B cell (primary cell): ENCODE measurements at regions of chr10 and their contacts with region 1.

Region 1: GRCh38 chr10:22988581-22989360 is 60.9 kb downstream of the ARMC3 start:
- DNase-seq: peak; percentile 82
- ATAC-seq: peak; percentile 83
- H3K4me3 ChIP-seq: no peak overlapping the region
- H3K4me3 Mint-ChIP-seq: no peak overlapping the region
- H3K27ac ChIP-seq: no peak overlapping the region
- H3K27ac Mint-ChIP-seq: peak overlapping the region; percentile 22
- H3K4me1 ChIP-seq: no peaks in the 10 kb centered on the region
- H3K4me1 Mint-ChIP-seq: peaks cover 6% of the 10 kb centered on the region
- H3K27me3 ChIP-seq: peaks cover 0 to 3% (median 0%) of the 10 kb centered on the region in 4 experiments
- H3K27me3 Mint-ChIP-seq: peaks cover 16% of the 10 kb centered on the region
- CTCF ChIP-seq: peak; percentile 97

Region 2: DNA sequence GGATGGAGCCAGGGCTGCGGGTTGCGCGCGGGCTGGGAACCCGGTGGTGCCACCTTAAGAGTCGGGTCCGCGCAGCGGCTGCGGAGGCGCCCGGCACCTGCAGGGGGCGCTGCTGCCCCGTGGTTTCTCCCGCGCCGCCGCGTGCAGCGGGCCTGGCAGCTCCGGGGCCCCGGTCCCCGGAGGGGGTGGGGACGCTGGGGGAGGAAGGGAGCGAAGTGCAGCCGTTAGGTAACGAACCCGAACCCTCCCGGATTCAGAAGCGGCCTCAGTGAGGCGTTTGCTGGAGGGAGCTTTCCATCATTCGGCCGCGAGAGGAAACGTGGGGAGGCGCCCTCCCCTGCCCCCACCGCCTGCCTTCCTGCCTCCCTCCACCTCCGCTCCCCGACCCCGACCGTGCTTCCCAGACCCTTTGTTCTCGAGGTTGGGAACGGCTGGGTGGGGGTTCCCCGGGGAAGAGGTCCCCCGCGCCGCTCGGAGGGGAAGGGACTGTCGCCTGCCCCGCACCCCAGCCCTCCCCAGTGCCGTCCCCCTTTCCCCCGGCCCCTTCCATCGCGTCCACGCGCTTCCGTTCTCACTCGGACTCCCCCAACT is 1492.9 kb before region 1 on chr10:
- CTCF ChIA-PET with region 1: interaction called, 4 read pairs
- POLR2A ChIA-PET with region 1: no interaction called
- intact Hi-C with region 1: loop called (anchors 2 kb)
- DNase-seq: peak; percentile 88
- ATAC-seq: peak; percentile 82
- H3K4me3 ChIP-seq: peak overlapping the region; percentile 44 to 74 (median 67)
- H3K4me3 Mint-ChIP-seq: peak overlapping the region; percentile 92
- H3K27ac ChIP-seq: no peak overlapping the region
- H3K27ac Mint-ChIP-seq: no peak overlapping the region
- H3K4me1 ChIP-seq: peaks cover 47 to 51% of the 10 kb centered on the region in 2 donors
- H3K4me1 Mint-ChIP-seq: peaks cover 39% of the 10 kb centered on the region
- H3K27me3 ChIP-seq: peaks cover 2 to 66% (median 55%) of the 10 kb centered on the region in 4 experiments
- H3K27me3 Mint-ChIP-seq: peaks cover 60% of the 10 kb centered on the region
- CTCF ChIP-seq: peak; percentile 96

Region 3: DNA sequence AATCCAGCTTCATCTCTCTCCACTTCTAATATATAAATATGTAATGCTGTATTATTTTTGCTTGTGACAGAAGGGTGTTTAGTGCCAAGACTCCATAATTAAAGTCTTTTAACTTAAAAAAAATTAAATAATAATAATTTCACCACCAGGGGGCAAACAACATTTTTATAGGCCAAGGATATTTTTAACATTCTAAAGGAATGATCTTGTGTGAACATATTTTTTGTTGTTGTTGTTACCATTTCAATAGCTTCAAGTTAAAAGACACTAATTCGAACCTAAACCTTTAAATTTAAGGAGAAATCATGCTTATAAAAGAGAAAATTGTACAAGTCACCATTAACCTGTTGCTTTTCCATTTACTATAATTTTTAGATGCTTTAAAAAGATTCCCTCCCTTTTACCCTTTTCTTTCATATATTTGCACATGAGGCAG is 977.8 kb before region 1 on chr10:
- CTCF ChIA-PET with region 1: interaction called, 103 read pairs
- POLR2A ChIA-PET with region 1: no interaction called
- intact Hi-C with region 1: loop called (anchors 1 kb)
- DNase-seq: peak; percentile 39
- ATAC-seq: no peak
- H3K4me3 ChIP-seq: no peak overlapping the region
- H3K4me3 Mint-ChIP-seq: no peak overlapping the region
- H3K27ac ChIP-seq: no peak overlapping the region
- H3K27ac Mint-ChIP-seq: no peak overlapping the region
- H3K4me1 ChIP-seq: peaks cover 0 to 3% of the 10 kb centered on the region in 2 donors
- H3K4me1 Mint-ChIP-seq: peaks cover 5% of the 10 kb centered on the region
- H3K27me3 ChIP-seq: no peaks in the 10 kb centered on the region
- H3K27me3 Mint-ChIP-seq: no peaks in the 10 kb centered on the region
- CTCF ChIP-seq: peak; percentile 83

Region 4: DNA sequence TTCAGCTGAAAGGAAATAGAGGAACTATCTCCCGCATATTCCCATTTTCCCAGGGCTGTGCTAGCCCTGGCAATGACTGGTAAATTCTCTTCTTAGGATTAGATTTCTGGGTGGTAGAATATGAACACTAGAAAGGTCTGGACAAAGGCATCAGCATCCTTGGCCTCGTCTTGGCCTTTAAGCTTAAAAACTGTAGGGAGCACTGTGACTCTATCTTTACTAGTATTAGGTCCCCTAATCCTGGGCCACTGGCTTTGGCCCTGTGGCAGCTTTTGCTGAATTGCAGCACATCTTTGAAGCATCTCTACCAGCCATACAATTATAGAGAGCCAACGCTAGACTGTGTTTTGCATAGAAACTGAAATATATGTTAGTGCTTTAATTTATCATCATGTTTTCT is 729.5 kb before region 1 on chr10:
- CTCF ChIA-PET with region 1: interaction called, 5 read pairs
- POLR2A ChIA-PET with region 1: no interaction called
- intact Hi-C with region 1: loop called (anchors 1 kb)
- DNase-seq: peak; percentile 34
- ATAC-seq: peak; percentile 45
- H3K4me3 ChIP-seq: no peak overlapping the region
- H3K4me3 Mint-ChIP-seq: no peak overlapping the region
- H3K27ac ChIP-seq: no peak overlapping the region
- H3K27ac Mint-ChIP-seq: no peak overlapping the region
- H3K4me1 ChIP-seq: peaks cover 0 to 4% of the 10 kb centered on the region in 2 donors
- H3K4me1 Mint-ChIP-seq: peaks cover 10% of the 10 kb centered on the region
- H3K27me3 ChIP-seq: peaks cover 0 to 14% (median 2%) of the 10 kb centered on the region in 4 experiments
- H3K27me3 Mint-ChIP-seq: peaks cover 19% of the 10 kb centered on the region
- CTCF ChIP-seq: peak; percentile 25

Region 5: DNA sequence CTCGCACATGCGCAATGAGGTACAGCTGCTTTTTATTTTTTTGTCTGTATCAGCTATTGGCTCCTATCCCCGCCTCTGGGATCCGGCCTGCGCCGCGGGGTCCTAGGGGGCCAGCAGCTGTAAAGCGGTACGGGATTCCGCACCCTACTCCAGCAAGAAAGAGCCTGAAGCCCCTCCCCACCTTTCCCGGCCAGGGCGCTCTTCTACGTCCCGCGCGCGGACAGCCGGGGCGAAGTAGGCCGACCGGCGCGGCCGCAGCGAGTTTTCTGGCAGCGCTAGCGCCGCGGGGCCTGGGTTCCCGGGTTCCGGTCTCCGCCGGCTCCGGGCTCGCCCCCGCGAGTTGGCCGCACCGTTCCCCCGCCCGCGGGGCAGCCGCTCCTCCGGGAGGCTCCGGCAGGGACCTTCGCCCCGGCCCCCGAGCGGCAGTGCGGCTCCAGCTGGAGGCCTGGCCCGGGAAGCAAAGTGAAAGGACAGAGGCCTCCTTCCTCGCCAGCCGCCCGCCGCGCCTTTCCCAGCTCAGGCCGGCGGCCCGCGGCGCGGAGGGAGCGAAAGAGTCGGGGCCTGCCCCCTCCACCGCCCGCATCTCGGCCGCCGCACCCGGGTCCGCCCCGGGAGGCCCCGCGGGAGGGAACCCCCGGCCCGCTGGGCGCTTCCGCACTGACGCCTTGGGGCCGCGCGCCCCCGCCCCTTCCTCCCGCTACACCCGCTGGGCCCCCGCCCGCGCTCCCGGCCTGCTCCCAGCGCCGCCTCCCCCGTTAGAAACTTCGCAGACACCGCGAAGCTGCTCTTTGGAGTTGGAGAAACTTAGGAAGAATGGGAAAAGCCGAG is 648.2 kb before region 1 on chr10:
- CTCF ChIA-PET with region 1: interaction called, 10 read pairs
- POLR2A ChIA-PET with region 1: no interaction called
- intact Hi-C with region 1: loop called (anchors 5 kb)
- DNase-seq: peak; percentile 92
- ATAC-seq: peak; percentile 62
- H3K4me3 ChIP-seq: peak overlapping the region; percentile 62 to 79 (median 73)
- H3K4me3 Mint-ChIP-seq: peak overlapping the region; percentile 94
- H3K27ac ChIP-seq: peak overlapping the region; percentile 70 to 81
- H3K27ac Mint-ChIP-seq: peak overlapping the region; percentile 94
- H3K4me1 ChIP-seq: peaks cover 38 to 72% of the 10 kb centered on the region in 2 donors
- H3K4me1 Mint-ChIP-seq: peaks cover 31% of the 10 kb centered on the region
- H3K27me3 ChIP-seq: peaks cover 11 to 86% (median 73%) of the 10 kb centered on the region in 4 experiments
- H3K27me3 Mint-ChIP-seq: peaks cover 58% of the 10 kb centered on the region
- CTCF ChIP-seq: no peak

Region 6: DNA sequence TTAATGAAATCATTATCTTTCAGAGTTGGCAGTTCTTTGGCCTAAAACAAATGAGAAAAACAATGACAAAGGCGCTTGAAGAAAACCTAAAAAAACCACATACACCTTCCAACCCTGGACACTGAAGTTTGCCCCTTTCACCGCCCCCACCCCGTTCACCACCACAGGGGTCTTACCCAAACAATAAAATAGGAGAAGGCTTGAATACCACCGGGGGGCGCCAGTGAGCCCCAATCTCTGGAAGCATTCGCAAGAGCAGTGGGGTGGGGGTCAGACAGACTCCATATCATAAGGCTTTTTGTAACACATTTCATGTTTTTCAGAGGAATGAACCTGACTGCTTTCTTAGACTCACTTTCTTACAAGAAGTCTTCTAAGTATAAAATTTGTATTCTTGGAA is 438.0 kb before region 1 on chr10:
- CTCF ChIA-PET with region 1: interaction called, 25 read pairs
- POLR2A ChIA-PET with region 1: no interaction called
- intact Hi-C with region 1: loop called (anchors 1 kb)
- DNase-seq: peak; percentile 72
- ATAC-seq: peak; percentile 49
- H3K4me3 ChIP-seq: no peak overlapping the region
- H3K4me3 Mint-ChIP-seq: no peak overlapping the region
- H3K27ac ChIP-seq: no peak overlapping the region
- H3K27ac Mint-ChIP-seq: no peak overlapping the region
- H3K4me1 ChIP-seq: no peaks in the 10 kb centered on the region
- H3K4me1 Mint-ChIP-seq: peaks cover 5% of the 10 kb centered on the region
- H3K27me3 ChIP-seq: no peaks in the 10 kb centered on the region
- H3K27me3 Mint-ChIP-seq: no peaks in the 10 kb centered on the region
- CTCF ChIP-seq: peak; percentile 84

Region 7: DNA sequence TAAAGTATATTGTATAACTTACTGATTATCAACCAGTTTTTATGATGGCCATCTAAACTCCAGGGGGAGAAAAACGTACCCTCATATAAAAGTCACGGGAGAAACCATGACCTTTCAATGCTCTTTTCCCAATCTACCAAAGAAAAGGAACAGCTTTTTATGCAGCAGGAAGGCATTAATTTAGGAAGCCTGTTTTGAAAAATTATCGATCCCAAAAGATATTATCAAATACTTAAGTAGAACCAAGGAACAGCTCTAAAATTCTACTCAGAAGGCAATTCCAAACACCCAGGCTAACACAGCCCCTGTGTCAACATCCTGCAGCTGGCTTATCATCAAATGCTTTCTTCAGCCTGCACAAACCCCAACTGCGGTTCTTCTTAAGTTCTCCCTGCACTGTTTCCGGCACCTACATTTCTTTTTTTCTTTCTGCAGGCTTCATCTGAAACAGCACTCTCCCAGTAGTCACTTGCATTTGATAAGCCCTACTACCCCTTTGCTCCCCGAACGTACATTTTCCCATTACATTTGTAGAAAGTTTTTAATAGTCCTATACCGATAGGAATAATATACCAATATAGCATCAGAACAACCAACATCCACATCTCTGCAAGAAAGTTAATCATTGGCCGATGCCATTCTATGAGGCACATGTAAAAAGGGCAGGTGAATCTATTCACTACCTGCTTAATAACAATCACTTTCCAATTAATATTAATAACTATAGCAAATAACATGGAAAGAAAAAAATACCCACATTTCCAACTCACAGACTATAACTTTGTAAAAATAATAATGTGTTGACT is 322.3 kb before region 1 on chr10:
- CTCF ChIA-PET with region 1: no interaction called
- POLR2A ChIA-PET with region 1: no interaction called
- intact Hi-C with region 1: loop called (anchors 10 kb)
- DNase-seq: peak; percentile 45
- ATAC-seq: peak; percentile 76
- H3K4me3 ChIP-seq: peak overlapping the region in 3 of 5 experiments; percentile 5 to 30 (median 15)
- H3K4me3 Mint-ChIP-seq: peak overlapping the region; percentile 76
- H3K27ac ChIP-seq: peak overlapping the region in 1 of 2 donors; percentile 59
- H3K27ac Mint-ChIP-seq: peak overlapping the region; percentile 56
- H3K4me1 ChIP-seq: peaks cover 22 to 38% of the 10 kb centered on the region in 2 donors
- H3K4me1 Mint-ChIP-seq: peaks cover 62% of the 10 kb centered on the region
- H3K27me3 ChIP-seq: no peaks in the 10 kb centered on the region
- H3K27me3 Mint-ChIP-seq: no peaks in the 10 kb centered on the region
- CTCF ChIP-seq: no peak

Region 8: DNA sequence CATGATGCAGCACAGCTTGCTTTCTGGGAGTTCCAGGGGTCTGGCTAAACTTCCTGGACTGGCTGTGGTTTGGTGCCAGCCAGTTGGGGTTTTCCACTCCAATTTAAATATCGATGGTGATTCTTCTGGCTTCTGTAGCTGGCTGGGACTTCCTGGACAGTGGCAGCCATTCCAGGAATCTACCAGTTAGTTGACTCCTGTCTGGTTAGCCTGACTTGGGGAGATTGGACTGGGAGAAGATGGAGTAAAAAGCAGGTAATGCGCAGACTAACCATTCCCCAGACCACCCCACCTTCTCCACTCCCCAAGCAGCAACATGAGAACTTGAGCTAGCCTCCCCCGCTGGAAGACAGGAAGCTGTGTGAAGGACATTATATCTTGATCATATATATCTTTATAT is 268.1 kb before region 1 on chr10:
- CTCF ChIA-PET with region 1: no interaction called
- POLR2A ChIA-PET with region 1: no interaction called
- intact Hi-C with region 1: no loop called
- DNase-seq: no peak
- ATAC-seq: no peak
- H3K4me3 ChIP-seq: no peak overlapping the region
- H3K4me3 Mint-ChIP-seq: no peak overlapping the region
- H3K27ac ChIP-seq: no peak overlapping the region
- H3K27ac Mint-ChIP-seq: no peak overlapping the region
- H3K4me1 ChIP-seq: peaks cover 27 to 29% of the 10 kb centered on the region in 2 donors
- H3K4me1 Mint-ChIP-seq: peaks cover 40% of the 10 kb centered on the region
- H3K27me3 ChIP-seq: no peaks in the 10 kb centered on the region
- H3K27me3 Mint-ChIP-seq: no peaks in the 10 kb centered on the region
- CTCF ChIP-seq: no peak

Region 9: GRCh38 chr10:22927661-22928403 is 60.9 kb before region 1 on chr10 and contains the start of gene ARMC3:
- CTCF ChIA-PET with region 1: no interaction called
- POLR2A ChIA-PET with region 1: no interaction called
- intact Hi-C with region 1: no loop called
- DNase-seq: peak; percentile 77
- ATAC-seq: peak; percentile 81
- H3K4me3 ChIP-seq: peak within 1 kb of the TSS in 4 of 5 experiments; percentile 24 to 61 (median 44)
- H3K4me3 Mint-ChIP-seq: no peak within 1 kb of the TSS
- H3K27ac ChIP-seq: no peak within 1 kb of the TSS
- H3K27ac Mint-ChIP-seq: no peak within 1 kb of the TSS
- H3K4me1 ChIP-seq: peaks cover 25 to 28% of the 10 kb centered on the region in 2 donors
- H3K4me1 Mint-ChIP-seq: peaks cover 18% of the 10 kb centered on the region
- H3K27me3 ChIP-seq: peaks cover 0 to 12% (median 9%) of the 10 kb centered on the region in 4 experiments
- H3K27me3 Mint-ChIP-seq: peaks cover 11% of the 10 kb centered on the region
- CTCF ChIP-seq: no peak
- total RNA-seq, gene ARMC3: not detected in 2 replicates

Region 10: DNA sequence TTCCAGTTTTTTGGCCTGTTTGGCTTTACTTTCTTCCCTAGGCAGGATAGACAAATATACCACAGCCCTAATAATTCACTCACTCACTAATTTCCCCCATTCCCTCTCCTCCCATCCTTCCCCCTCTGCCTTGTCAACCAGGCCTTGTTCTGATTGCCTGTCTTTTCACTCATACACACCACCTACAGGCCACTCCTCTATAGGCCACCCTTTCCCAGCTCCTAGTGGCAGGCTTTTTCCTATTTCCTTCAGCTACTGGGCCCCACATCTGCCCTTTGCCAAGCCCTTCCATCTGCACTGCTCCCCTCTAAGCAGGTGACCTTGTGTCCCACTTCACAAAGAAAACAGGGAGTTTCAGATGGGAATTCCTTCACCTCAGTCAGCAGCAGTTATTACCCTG is 46.8 kb after region 1 on chr10:
- CTCF ChIA-PET with region 1: no interaction called
- POLR2A ChIA-PET with region 1: no interaction called
- intact Hi-C with region 1: no loop called
- DNase-seq: no peak
- ATAC-seq: no peak
- H3K4me3 ChIP-seq: no peak overlapping the region
- H3K4me3 Mint-ChIP-seq: no peak overlapping the region
- H3K27ac ChIP-seq: no peak overlapping the region
- H3K27ac Mint-ChIP-seq: no peak overlapping the region
- H3K4me1 ChIP-seq: no peaks in the 10 kb centered on the region
- H3K4me1 Mint-ChIP-seq: no peaks in the 10 kb centered on the region
- H3K27me3 ChIP-seq: peaks cover 0 to 5% (median 1%) of the 10 kb centered on the region in 4 experiments
- H3K27me3 Mint-ChIP-seq: peaks cover 57% of the 10 kb centered on the region
- CTCF ChIP-seq: no peak

Region 11: GRCh38 chr10:23095404-23095965 is 106.7 kb after region 1 on chr10 and contains the start of gene MSRB2:
- CTCF ChIA-PET with region 1: no interaction called
- POLR2A ChIA-PET with region 1: no interaction called
- intact Hi-C with region 1: no loop called
- DNase-seq: peak; percentile 79
- ATAC-seq: peak; percentile 81
- H3K4me3 ChIP-seq: peak within 1 kb of the TSS; percentile 42 to 83 (median 58)
- H3K4me3 Mint-ChIP-seq: peak within 1 kb of the TSS; percentile 96
- H3K27ac ChIP-seq: peak within 1 kb of the TSS in 1 of 2 donors; percentile 64
- H3K27ac Mint-ChIP-seq: peak within 1 kb of the TSS; percentile 86
- H3K4me1 ChIP-seq: peaks cover 12% of the 10 kb centered on the region in 2 donors
- H3K4me1 Mint-ChIP-seq: peaks cover 22% of the 10 kb centered on the region
- H3K27me3 ChIP-seq: no peaks in the 10 kb centered on the region
- H3K27me3 Mint-ChIP-seq: no peaks in the 10 kb centered on the region
- CTCF ChIP-seq: no peak
- total RNA-seq, gene MSRB2: 3.0 and 3.5 TPM in 2 replicates